ENCODE measurements at regions of chr3 and their contacts with region 1.

Region 1: DNA sequence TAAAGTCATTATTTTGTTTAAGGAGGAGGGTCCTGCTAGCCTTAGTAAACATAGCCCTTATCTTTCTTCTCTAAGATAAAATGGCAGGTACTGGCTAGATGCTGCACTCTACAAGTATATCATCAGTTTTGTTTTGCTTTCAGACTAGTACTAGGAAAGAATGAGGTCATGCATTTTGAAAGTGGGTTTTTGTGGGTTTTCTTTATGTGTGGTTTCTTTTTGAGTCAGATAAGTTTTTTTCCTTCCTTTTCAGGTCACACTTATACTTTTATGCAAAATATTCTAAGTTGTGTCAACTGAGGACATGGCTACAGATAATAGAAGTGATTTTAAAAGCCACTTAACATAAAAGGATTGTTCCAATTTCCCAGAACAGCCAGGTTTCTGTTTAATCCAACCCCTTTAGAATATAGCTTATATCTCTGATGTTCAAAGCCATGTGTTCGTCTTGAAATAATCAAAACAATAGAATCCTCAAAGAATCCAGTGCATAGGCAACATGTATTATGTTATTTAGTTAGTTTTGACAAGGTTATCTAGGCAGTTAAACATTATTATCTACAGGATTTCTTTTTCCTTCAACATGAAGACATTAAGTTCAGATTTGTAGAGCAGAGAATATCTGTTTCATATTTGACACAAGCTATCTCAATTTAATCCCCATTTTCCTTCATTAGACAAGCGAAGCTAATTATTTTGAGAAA is 406.2 kb downstream of the RBMS3 start:
- DNase-seq: peak; percentile 5
- H3K4me3 Mint-ChIP-seq: no peak overlapping the region
- H3K27ac Mint-ChIP-seq: peak overlapping the region; percentile 36
- H3K4me1 Mint-ChIP-seq: peaks cover 8% of the 10 kb centered on the region
- H3K27me3 Mint-ChIP-seq: peaks cover 5% of the 10 kb centered on the region

Region 2: GRCh38 chr3:28840976-28841376 is 846.1 kb before region 1 on chr3:
- intact Hi-C with region 1: loop called (anchors 1 kb)
- DNase-seq: peak; percentile 1
- H3K4me3 Mint-ChIP-seq: no peak overlapping the region
- H3K27ac Mint-ChIP-seq: peak overlapping the region; percentile 56
- H3K4me1 Mint-ChIP-seq: peaks cover 28% of the 10 kb centered on the region
- H3K27me3 Mint-ChIP-seq: no peaks in the 10 kb centered on the region

Region 3: DNA sequence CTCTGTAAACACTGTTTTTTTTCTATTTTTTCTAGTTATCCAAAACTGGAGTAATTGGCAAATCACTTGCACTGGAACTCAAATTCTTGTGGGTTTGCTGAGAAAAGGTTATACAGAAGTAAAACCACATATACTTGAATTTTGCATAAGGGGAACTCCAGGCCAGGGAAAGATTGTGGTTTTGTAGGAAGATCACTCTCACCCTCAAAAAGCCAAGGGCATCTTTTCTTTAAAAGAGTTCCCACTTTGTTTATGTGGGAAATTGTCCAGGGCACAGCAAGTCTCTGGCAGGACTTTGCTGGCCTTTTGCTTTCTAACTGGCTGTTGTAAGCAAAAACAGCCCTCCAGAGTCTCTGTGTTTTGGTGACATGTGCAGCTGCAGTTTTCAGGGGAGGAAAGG is 746.5 kb before region 1 on chr3:
- intact Hi-C with region 1: loop called (anchors 2 kb)
- DNase-seq: no peak
- H3K4me3 Mint-ChIP-seq: peak overlapping the region; percentile 32
- H3K27ac Mint-ChIP-seq: peak overlapping the region; percentile 37
- H3K4me1 Mint-ChIP-seq: peaks cover 38% of the 10 kb centered on the region
- H3K27me3 Mint-ChIP-seq: peaks cover 17% of the 10 kb centered on the region

Region 4: DNA sequence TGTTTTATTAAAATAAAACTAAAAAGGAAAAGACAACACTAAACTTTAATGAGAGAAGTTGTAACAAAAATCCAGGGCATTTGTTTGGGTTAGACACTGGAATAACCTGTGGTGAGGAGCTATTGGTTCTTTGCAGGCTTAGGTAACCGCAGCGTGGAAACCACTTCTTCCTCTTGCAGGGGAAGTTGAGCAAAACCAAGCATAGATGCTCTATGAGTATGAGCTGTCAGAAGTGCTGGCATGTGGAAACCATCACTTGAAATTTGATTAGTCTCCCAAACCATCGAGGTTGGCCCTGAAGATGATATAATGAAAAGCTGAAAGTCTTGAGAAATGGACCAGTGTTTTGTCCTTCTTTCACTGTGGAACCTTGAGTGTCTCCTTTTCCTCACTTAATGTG is 533.2 kb before region 1 on chr3:
- intact Hi-C with region 1: loop called (anchors 5 kb)
- DNase-seq: peak; percentile 62
- H3K4me3 Mint-ChIP-seq: no peak overlapping the region
- H3K27ac Mint-ChIP-seq: no peak overlapping the region
- H3K4me1 Mint-ChIP-seq: peaks cover 13% of the 10 kb centered on the region
- H3K27me3 Mint-ChIP-seq: peaks cover 15% of the 10 kb centered on the region

Region 5: GRCh38 chr3:29285471-29286071 is 401.5 kb before region 1 on chr3:
- intact Hi-C with region 1: loop called (anchors 2 kb)
- DNase-seq: no peak
- H3K4me3 Mint-ChIP-seq: peak overlapping the region; percentile 37
- H3K27ac Mint-ChIP-seq: peak overlapping the region; percentile 19
- H3K4me1 Mint-ChIP-seq: peaks cover 53% of the 10 kb centered on the region
- H3K27me3 Mint-ChIP-seq: peaks cover 3% of the 10 kb centered on the region

Region 6: GRCh38 chr3:29537889-29538609 is 149.0 kb before region 1 on chr3:
- intact Hi-C with region 1: no loop called
- DNase-seq: no peak
- H3K4me3 Mint-ChIP-seq: no peak overlapping the region
- H3K27ac Mint-ChIP-seq: no peak overlapping the region
- H3K4me1 Mint-ChIP-seq: no peaks in the 10 kb centered on the region
- H3K27me3 Mint-ChIP-seq: no peaks in the 10 kb centered on the region

Measured in activated T-helper 1 cell treated with anti-CD3 and anti-CD28 coated beads, Interleukin-12 subunit alpha, Interleukin-12 subunit beta, Interleukin-2, Interleukin-4 antibody, amounts not matched to agents 30 ng/mL and 10 ng/mL and 1 ng/mL, durations not matched to agents 14 hours and 24 hours and 36 hours (primary cell).